H1 (cell line): ENCODE measurements at regions of chr3 and their contacts with region 1.

Region 1: DNA sequence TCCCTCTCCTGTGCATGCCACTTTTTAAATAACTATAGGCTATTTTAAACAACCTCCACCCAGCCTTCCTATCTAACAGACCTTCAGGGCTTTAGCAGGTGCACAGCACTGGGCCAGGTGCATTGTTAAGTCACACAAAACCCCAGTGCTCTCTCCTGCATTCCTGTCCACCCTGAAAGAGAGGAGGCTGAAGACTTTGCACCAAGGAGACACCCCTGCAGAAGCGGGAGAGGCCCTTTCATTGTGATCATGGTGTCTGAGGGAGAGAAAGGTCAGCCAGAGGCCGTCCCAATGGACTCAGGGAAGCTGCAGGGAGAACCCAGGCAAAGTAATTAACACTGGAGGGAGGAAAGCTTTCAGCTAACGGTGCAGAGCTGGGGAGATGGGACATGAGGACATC is 5.2 kb downstream of the LRIG1 start:
- DNase-seq: no peak
- H3K4me3 ChIP-seq: peak overlapping the region in 2 of 4 experiments; percentile 0 to 90; a peak in 4 of 8 replicates
- H3K27ac ChIP-seq: no peak overlapping the region
- H3K4me1 ChIP-seq: peaks cover 9 to 40% (median 29%) of the 10 kb centered on the region in 4 experiments
- H3K27me3 ChIP-seq: no peaks in the 10 kb centered on the region
- CTCF ChIP-seq: no peak
- EP300 ChIP-seq: peak in 1 of 2 experiments; percentile 77; a peak in 1 of 3 replicates
- POLR2A ChIP-seq: no peak; a peak in 1 of 3 replicates
- RAD21 ChIP-seq: no peak

Region 2: DNA sequence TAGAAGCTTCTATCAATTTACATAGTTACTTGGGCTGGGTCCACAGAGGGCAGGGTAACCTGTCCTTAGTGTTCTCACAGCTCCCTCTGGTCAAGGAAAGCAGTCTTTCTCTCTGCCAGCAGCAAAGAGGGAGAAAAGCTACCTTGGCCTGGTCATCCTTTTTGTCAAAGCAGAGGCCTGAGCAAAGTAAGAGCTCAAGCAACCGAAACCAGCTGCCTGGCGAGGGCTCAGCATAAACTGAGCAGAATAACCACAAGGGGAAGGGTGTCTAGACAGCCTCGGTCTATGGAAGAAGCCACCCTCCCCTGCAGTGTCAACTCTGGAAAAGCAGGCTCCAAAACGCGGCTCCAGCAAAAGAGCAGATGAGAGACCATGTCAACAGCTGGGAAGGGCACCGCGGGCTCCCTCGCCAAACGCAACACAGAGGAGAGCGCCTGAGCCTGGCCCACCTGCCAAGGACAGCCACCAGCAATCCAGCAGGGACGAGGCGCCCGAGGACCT is 12.2 kb before region 1 on chr3:
- CTCF ChIA-PET with region 1: interaction called, 4 read pairs
- POLR2A ChIA-PET with region 1: interaction called, 16 read pairs
- DNase-seq: no peak
- H3K4me3 ChIP-seq: no peak overlapping the region
- H3K27ac ChIP-seq: no peak overlapping the region
- H3K4me1 ChIP-seq: peaks cover 6 to 66% (median 48%) of the 10 kb centered on the region in 4 experiments
- H3K27me3 ChIP-seq: no peaks in the 10 kb centered on the region
- CTCF ChIP-seq: no peak
- EP300 ChIP-seq: no peak
- POLR2A ChIP-seq: no peak
- RAD21 ChIP-seq: no peak; a peak in 1 of 4 replicates